ENCODE measurements at regions of chr5 and their contacts with region 1.

Region 1: GRCh38 chr5:9524941-9525340 is 20.9 kb downstream of the SEMA5A start:
- H3K4me3 ChIP-seq: no peak overlapping the region
- H3K27ac ChIP-seq: no peak overlapping the region
- H3K4me1 ChIP-seq: peaks cover 11% of the 10 kb centered on the region
- CTCF ChIP-seq: no peak

Region 2: DNA sequence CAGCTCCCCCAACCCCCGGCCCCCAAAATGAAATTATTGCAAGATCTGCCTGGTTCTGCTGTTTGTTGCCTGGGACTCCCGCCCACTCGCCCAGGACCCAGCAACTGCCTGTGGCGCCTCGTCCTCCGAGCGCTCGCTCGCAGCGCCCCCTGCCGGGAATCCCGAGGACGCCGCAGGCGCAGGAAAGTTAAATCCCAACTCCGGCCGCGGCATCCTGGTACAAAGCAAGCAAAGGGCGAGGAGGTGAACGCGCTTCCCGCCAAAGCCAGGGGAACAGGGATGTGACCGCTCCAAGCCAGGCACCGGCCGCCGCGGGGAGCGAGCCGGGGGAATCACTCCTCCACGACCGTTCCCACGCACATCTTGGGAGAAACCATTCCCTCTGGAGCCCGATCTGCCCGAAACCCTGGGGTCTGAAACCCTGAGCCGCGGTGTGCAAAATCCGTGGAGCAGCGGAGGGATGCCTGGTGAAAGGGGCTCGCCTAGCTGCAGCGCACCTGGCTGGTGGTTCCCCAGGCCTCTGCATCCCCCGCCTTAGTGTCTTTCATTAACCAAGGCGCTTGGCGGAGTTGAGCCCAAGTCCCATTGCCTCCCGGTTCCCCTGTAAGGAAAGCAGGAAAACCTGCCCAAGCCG is 19.7 kb after region 1 on chr5:
- CTCF ChIA-PET with region 1: interaction called, 11 read pairs
- POLR2A ChIA-PET with region 1: no interaction called
- H3K4me3 ChIP-seq: peak overlapping the region; percentile 66
- H3K27ac ChIP-seq: no peak overlapping the region; the same call in 1 of the 2 replicates
- H3K4me1 ChIP-seq: no peaks in the 10 kb centered on the region; the same call in 1 of the 2 replicates
- CTCF ChIP-seq: no peak